AG04449 (cell line): ENCODE measurements at regions of chr15 and their contacts with region 1.

Region 1: DNA sequence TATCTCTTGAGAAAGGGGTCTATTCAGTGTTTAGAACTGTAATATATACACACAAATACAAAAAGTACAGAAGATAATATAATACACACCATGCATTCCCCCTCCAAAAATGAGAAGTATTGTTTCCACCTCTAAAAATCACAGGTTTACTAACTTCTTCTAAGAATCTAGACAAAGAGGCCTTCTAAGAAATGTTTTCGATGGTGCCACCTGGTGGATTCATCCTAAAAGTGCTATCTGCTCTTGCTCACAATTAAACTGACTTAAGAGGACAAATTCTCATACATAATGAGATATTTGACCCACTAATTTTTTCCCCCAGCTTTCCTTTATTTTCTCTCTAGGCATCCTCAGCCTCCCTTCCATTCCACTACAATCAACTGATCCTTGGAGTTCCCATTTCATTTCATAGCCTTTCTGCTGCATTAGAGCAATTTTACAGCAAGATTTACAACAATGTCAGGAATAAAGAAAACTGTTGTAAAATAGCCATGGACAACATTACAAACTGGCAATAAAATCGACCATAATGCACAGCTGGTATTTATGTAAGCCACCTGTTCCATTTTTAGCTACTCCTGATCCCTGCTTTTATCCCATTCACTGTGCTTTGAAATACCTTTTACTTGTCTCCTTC is 124.6 kb downstream of the ARRDC4 start:
- DNase-seq: no peak
- H3K4me3 ChIP-seq: no peak overlapping the region
- CTCF ChIP-seq: peak; percentile 43

Region 2: GRCh38 chr15:97903971-97904572 is 181.0 kb before region 1 on chr15:
- CTCF ChIA-PET with region 1: interaction called, 62 read pairs
- POLR2A ChIA-PET with region 1: no interaction called
- DNase-seq: no peak
- H3K4me3 ChIP-seq: no peak overlapping the region
- CTCF ChIP-seq: peak; percentile 91

Region 3: DNA sequence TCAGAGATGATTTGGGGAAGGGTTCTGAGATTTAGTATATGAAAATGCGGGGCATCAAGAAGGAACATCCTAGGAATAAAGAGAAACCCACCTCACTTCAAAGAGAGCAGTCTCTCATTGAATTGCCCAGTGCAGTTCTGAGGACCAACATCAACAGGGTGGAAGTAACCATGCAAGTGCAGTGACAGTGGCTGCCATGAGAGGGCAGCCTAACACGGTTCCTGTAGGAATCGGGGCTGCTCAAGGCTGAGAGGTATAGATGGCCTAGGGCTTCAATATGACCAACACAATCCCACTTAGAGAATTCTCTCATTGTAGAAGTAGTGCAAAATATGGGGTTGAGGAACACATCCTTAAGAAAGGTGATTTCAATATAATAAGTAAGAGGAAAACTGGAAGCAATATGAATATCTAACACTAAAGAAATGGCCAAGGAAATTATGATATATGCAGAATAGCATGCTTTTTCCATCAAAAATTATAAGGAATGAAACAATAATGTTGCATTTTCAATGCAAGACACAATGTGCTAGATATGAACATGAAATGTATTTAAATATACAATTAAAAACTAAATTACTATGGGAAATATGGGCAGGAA is 175.7 kb before region 1 on chr15:
- CTCF ChIA-PET with region 1: interaction called, 62 read pairs
- POLR2A ChIA-PET with region 1: no interaction called
- DNase-seq: no peak
- H3K4me3 ChIP-seq: no peak overlapping the region
- CTCF ChIP-seq: peak; percentile 89